Caco-2 (cell line): ENCODE measurements at regions of chr1 and their contacts with region 1.

Region 1: DNA sequence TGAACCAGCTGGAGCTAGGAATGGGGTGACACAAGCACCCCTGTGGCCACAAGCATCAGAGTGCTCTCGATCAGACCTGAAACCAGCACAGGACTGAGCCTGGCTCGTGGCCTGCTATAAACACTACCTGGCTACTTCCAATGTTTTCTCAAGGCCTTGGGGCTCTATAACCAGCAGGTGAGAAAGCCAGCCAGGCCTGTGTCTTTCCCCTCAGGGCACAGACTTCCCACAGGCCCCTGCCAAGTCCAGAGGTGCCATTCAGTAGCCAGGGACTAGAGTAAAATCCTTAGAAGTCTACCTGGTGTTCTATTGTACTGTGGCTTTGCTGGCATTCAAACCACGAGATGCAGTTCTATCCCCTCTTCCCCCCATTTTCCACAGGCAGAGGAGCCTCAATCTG is 22.6 kb downstream of the OR2G3 start:
- DNase-seq: no peak
- H3K4me3 ChIP-seq: no peak overlapping the region
- H3K4me3 Mint-ChIP-seq: no peak overlapping the region
- H3K27ac Mint-ChIP-seq: no peak overlapping the region
- H3K4me1 ChIP-seq: no peaks in the 10 kb centered on the region
- H3K4me1 Mint-ChIP-seq: no peaks in the 10 kb centered on the region
- H3K27me3 ChIP-seq: no peaks in the 10 kb centered on the region
- H3K27me3 Mint-ChIP-seq: no peaks in the 10 kb centered on the region
- CTCF ChIP-seq: no peak

Region 2: GRCh38 chr1:247415423-247416361 is 212.3 kb before region 1 on chr1 and contains the start of gene NLRP3:
- CTCF ChIA-PET with region 1: no interaction called
- POLR2A ChIA-PET with region 1: no interaction called
- intact Hi-C with region 1: no loop called
- DNase-seq: no peak
- H3K4me3 ChIP-seq: no peak within 1 kb of the TSS
- H3K4me3 Mint-ChIP-seq: no peak within 1 kb of the TSS
- H3K27ac Mint-ChIP-seq: peak within 1 kb of the TSS; percentile 83
- H3K4me1 ChIP-seq: no peaks in the 10 kb centered on the region
- H3K4me1 Mint-ChIP-seq: peaks cover 8% of the 10 kb centered on the region
- H3K27me3 ChIP-seq: no peaks in the 10 kb centered on the region
- H3K27me3 Mint-ChIP-seq: peaks cover 5% of the 10 kb centered on the region
- CTCF ChIP-seq: no peak
- total RNA-seq, gene NLRP3: not detected in 2 replicates

Region 3: GRCh38 chr1:247435030-247435758 is 192.8 kb before region 1 on chr1:
- CTCF ChIA-PET with region 1: no interaction called
- POLR2A ChIA-PET with region 1: no interaction called
- intact Hi-C with region 1: no loop called
- DNase-seq: no peak
- H3K4me3 ChIP-seq: no peak overlapping the region
- H3K4me3 Mint-ChIP-seq: no peak overlapping the region
- H3K27ac Mint-ChIP-seq: no peak overlapping the region
- H3K4me1 ChIP-seq: no peaks in the 10 kb centered on the region
- H3K4me1 Mint-ChIP-seq: no peaks in the 10 kb centered on the region
- H3K27me3 ChIP-seq: no peaks in the 10 kb centered on the region
- H3K27me3 Mint-ChIP-seq: peaks cover 21% of the 10 kb centered on the region
- CTCF ChIP-seq: no peak

Region 4: DNA sequence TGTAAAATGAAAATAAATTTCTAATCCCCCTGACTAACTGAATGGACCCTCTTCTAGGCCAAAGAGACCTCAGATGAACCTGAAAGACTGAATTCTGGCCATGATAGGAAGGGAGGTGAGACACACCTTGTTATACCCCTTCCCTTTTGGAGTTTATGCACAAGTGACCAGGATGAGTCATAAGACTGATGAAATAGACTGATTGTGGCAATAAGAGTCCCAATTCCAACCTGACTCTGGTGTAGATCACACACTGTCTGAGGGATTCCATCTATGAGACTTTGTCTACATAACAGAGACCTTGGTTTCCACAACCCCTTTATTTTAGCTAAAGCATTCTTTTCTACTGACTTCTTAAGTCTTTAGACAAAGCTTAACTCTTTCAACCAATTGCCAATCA is 53.3 kb before region 1 on chr1:
- CTCF ChIA-PET with region 1: no interaction called
- POLR2A ChIA-PET with region 1: no interaction called
- intact Hi-C with region 1: no loop called
- DNase-seq: no peak
- H3K4me3 ChIP-seq: no peak overlapping the region
- H3K4me3 Mint-ChIP-seq: no peak overlapping the region
- H3K27ac Mint-ChIP-seq: no peak overlapping the region
- H3K4me1 ChIP-seq: no peaks in the 10 kb centered on the region
- H3K4me1 Mint-ChIP-seq: no peaks in the 10 kb centered on the region
- H3K27me3 ChIP-seq: no peaks in the 10 kb centered on the region
- H3K27me3 Mint-ChIP-seq: peaks cover 2% of the 10 kb centered on the region
- CTCF ChIP-seq: no peak

Region 5: DNA sequence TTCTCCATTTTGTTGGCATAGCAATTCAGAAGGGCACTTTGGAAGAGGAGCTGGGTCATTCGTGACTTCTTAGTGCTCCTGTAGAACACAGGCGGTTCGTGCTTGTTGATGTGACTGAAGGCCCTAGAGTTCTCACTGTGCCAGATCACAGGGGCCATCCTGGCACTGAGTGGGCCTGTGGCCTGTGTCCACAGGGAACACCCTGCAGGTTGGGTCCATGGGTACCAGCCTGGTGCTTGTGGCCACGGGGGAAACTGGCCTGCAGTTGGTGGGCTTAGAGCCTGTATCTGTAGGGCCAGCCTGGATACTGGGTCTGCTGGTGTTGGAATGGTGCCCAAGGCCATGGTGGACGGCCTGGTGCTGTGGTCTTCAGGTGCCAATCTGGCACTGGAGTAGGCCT is 13.3 kb before region 1 on chr1:
- CTCF ChIA-PET with region 1: no interaction called
- POLR2A ChIA-PET with region 1: no interaction called
- intact Hi-C with region 1: no loop called
- DNase-seq: no peak
- H3K4me3 ChIP-seq: no peak overlapping the region
- H3K4me3 Mint-ChIP-seq: no peak overlapping the region
- H3K27ac Mint-ChIP-seq: no peak overlapping the region
- H3K4me1 ChIP-seq: no peaks in the 10 kb centered on the region
- H3K4me1 Mint-ChIP-seq: peaks cover 7% of the 10 kb centered on the region
- H3K27me3 ChIP-seq: no peaks in the 10 kb centered on the region
- H3K27me3 Mint-ChIP-seq: peaks cover 2% of the 10 kb centered on the region
- CTCF ChIP-seq: no peak

Region 6: GRCh38 chr1:247639381-247639981 is 11.5 kb after region 1 on chr1:
- CTCF ChIA-PET with region 1: no interaction called
- POLR2A ChIA-PET with region 1: no interaction called
- intact Hi-C with region 1: loop called (anchors 1 kb)
- DNase-seq: no peak
- H3K4me3 ChIP-seq: no peak overlapping the region
- H3K4me3 Mint-ChIP-seq: no peak overlapping the region
- H3K27ac Mint-ChIP-seq: no peak overlapping the region
- H3K4me1 ChIP-seq: no peaks in the 10 kb centered on the region
- H3K4me1 Mint-ChIP-seq: no peaks in the 10 kb centered on the region
- H3K27me3 ChIP-seq: no peaks in the 10 kb centered on the region
- H3K27me3 Mint-ChIP-seq: peaks cover 5% of the 10 kb centered on the region
- CTCF ChIP-seq: no peak